Heart right ventricle (tissue), 16 donors: ENCODE measurements at regions of chr9 and their contacts with region 1.

Region 1: GRCh38 chr9:23811633-23812032 is 14.4 kb downstream of the ELAVL2 start:
- DNase-seq: no peak
- ATAC-seq: no peak
- H3K4me3 ChIP-seq: no peak overlapping the region
- H3K27ac ChIP-seq: no peak overlapping the region
- H3K4me1 ChIP-seq: no peaks in the 10 kb centered on the region
- H3K27me3 ChIP-seq: peaks cover 0 to 16% (median 0%) of the 10 kb centered on the region in 7 donors
- CTCF ChIP-seq: no peak

Region 2: DNA sequence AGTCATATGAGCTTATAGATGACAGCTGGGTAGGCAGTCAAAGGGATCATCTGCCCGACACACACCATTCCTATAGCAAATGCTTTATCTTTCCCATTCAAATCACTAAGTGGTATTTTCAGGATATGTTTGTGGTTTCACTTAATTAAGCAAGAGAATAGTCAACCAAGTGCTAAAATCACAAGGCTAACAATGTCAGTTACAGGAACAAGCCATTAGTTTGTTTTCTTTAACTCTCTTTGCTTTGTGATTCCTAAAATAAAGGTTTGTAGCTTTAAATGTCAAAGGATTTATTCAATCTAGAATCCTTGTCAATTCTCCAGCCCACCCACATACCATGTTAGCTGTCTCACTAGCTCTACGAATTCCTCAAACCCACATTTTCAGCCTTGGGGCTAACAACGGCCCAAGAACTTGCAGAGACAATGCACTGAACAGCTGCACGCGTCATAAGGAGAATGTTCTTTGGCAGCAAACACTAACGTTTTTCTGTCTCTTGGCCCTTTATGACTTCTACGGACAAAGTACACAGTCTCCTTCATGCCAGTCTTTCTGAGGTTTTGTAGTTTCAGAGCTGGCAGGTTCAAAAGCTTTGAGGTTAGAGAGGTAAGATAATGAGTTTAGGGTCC is 42.2 kb before region 1 on chr9:
- intact Hi-C with region 1: loop called in 1 of 10 experiments (anchors 10 kb)
- DNase-seq: no peak
- ATAC-seq: no peak
- H3K4me3 ChIP-seq: no peak overlapping the region
- H3K27ac ChIP-seq: no peak overlapping the region
- H3K4me1 ChIP-seq: peaks cover 0 to 8% (median 0%) of the 10 kb centered on the region in 9 donors
- H3K27me3 ChIP-seq: no peaks in the 10 kb centered on the region
- CTCF ChIP-seq: no peak

Region 3: DNA sequence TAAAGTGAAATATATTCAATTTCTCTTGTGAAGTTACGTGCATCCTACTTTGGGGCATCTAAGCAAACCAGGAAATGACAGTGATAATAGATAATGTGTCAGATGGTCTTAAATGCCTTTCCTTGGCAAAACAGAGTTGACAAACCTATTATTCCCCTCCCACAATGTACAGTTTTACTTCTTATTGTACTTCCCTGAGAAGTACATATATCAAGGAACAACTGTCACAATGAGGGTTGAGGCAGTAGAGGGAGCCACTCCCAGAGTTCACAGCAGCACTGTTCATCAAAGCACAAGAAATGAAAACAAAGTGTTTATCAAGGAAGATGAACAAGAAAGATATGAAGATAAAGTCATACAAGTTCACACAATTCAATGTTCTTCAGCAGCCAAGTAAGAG is 26.7 kb before region 1 on chr9:
- intact Hi-C with region 1: no loop called
- DNase-seq: no peak
- ATAC-seq: no peak
- H3K4me3 ChIP-seq: no peak overlapping the region
- H3K27ac ChIP-seq: no peak overlapping the region
- H3K4me1 ChIP-seq: no peaks in the 10 kb centered on the region
- H3K27me3 ChIP-seq: peaks cover 0 to 4% (median 0%) of the 10 kb centered on the region in 7 donors
- CTCF ChIP-seq: no peak